AG04449 (cell line): ENCODE measurements at regions of chr2 and their contacts with region 1.

Region 1: GRCh38 chr2:236180831-236181453 is 12.8 kb upstream of the GBX2 start:
- DNase-seq: no peak
- H3K4me3 ChIP-seq: no peak overlapping the region
- CTCF ChIP-seq: peak; percentile 59

Region 2: DNA sequence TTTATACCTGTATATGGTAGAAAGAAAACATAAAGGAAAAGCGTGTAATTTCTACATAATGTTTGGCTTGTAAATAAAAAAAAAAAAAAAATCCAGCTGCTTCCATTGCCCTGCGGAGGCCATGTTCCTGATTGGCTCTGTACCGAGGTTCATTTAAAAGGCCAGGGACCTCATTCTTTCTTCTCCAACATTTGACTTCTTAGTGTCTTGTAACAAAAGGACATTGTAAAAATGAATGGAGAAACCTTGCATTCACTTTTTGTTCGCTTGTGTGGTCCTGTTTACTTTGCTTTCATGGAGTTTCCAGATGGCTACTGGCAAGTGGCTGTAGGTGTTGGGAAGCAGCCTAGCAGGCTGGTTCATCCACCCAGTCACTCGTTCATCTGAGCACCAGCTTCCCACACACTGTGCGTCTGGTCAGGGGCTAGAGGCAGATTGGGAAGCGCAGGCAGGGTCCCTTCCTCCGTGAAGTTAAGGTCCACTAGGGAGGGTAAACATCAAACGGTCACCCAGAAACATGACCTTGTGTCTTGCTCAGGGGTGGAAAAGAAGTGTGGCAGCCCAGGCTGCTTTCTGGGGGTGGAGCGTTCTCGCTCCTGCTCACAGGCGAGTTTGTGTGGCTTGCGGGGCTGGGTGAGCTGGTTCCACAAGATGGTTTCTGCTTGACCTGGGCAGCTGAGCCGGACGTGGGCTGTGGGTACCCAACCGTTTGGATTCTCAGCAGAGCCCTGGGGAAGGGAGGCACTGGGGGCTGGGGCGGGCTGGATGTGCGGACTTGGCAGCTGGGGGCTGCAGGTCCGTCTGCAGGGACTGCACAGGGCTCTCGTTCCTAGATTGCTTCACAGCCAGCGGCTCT is 426.4 kb before region 1 on chr2:
- CTCF ChIA-PET with region 1: interaction called, 20 read pairs
- POLR2A ChIA-PET with region 1: no interaction called
- DNase-seq: no peak
- H3K4me3 ChIP-seq: no peak overlapping the region
- CTCF ChIP-seq: no peak

Region 3: GRCh38 chr2:235773188-235773928 is 407.6 kb before region 1 on chr2:
- CTCF ChIA-PET with region 1: interaction called, 429 read pairs
- POLR2A ChIA-PET with region 1: no interaction called
- DNase-seq: no peak
- H3K4me3 ChIP-seq: no peak overlapping the region
- CTCF ChIP-seq: no peak

Region 4: DNA sequence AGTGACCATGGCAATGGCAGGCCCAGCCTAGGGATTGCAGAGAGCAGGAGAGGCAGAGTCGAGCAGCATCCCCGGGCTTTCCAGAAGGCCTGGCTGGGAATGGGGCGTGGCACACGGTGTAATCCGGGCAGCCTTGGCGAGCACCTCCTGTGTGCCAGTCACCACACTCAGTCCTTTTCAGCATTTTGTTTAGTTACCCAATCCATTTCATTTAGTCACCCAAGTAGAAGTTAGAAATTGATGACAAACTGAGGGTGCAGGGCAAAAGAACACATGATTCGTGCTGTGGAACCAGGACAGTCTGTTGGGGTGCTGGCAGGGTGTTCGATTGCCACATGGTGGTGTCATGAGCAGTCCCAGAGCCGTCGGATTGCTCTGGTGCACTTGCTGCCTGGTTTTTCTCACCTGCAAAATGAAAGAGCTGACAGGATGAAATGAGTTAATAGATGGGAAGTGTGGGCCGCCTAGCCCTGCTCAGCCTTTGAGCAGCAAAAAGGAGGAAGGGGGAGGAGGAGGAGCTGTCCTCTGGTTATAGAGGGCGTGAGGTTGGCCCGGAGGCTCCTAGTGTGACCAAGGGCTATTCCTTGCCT is 387.7 kb before region 1 on chr2:
- CTCF ChIA-PET with region 1: interaction called, 150 read pairs
- POLR2A ChIA-PET with region 1: no interaction called
- DNase-seq: no peak
- H3K4me3 ChIP-seq: no peak overlapping the region
- CTCF ChIP-seq: peak; percentile 44

Region 5: DNA sequence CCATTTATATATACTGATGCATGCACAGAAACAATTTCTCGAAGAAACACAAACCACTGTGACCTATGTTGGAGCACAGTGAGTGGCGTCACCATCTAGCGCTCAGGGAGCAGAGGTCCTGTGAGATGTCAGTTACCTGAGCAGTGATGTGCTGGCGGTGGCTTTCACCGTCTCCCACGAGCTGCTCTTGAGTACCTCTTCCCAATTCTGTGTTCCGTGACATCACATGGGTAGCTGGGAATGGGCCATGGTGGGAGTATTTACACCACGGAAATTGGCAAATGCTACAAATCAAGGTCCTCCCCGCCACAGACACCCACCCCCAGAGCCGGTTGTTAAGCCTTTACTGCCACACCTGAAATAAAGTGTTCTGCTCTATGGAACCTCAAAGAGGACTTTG is 37.1 kb before region 1 on chr2:
- CTCF ChIA-PET with region 1: interaction called, 13 read pairs
- POLR2A ChIA-PET with region 1: no interaction called
- DNase-seq: no peak
- H3K4me3 ChIP-seq: no peak overlapping the region
- CTCF ChIP-seq: no peak

Region 6: GRCh38 chr2:236193051-236193450 is 12.1 kb after region 1 on chr2:
- CTCF ChIA-PET with region 1: interaction called, 21 read pairs
- POLR2A ChIA-PET with region 1: no interaction called
- DNase-seq: no peak
- H3K4me3 ChIP-seq: no peak overlapping the region
- CTCF ChIP-seq: no peak